PC-3 (cell line): ENCODE measurements at regions of chr6 and their contacts with region 1.

Region 1: DNA sequence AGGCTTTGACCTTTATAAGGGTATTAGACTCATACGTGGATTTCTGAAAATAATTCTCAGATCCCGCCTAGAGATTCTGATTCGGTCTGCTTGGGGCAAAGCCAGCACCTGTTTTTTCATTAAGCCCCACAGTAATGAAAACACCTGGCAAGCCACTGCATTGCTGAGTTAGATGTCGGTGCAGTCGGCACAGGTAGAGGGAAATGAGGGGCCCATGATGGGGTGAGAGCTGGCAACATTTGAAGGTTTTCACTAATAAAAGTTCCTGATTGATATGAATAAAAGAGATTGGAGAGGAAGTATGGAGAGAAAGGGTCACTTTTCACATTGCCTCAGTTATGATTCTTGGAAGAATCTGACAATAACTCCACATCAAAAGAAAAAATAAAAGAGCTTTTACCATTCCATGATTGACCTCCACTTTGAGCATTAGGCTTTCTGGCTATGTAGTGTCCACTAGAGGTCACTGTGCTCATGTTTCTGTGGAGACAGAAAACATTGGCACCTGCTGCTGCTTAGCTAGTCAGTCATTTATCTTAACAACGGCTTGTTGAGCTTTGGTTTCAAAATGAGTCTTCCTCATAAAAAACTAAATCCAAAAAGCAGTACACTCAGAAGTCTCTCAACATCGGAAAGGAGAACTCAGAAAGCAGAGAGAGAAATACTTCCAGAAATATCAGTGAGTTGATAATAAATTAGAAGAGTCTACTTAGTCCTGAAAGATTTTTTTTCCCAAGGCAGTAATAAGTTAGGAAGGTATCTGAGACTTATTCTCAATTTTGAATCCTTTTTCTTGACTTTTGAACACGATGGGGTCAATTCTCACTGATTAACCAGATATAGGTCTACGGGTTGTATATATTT is 53.3 kb upstream of the KLHL31 start:
- DNase-seq: peak; percentile 88
- ATAC-seq: peak; percentile 93
- H3K4me3 ChIP-seq: no peak overlapping the region
- H3K27ac ChIP-seq: no peak overlapping the region
- H3K4me1 ChIP-seq: peaks cover 15% of the 10 kb centered on the region
- H3K27me3 ChIP-seq: no peaks in the 10 kb centered on the region
- CTCF ChIP-seq: peak; percentile 94

Region 2: DNA sequence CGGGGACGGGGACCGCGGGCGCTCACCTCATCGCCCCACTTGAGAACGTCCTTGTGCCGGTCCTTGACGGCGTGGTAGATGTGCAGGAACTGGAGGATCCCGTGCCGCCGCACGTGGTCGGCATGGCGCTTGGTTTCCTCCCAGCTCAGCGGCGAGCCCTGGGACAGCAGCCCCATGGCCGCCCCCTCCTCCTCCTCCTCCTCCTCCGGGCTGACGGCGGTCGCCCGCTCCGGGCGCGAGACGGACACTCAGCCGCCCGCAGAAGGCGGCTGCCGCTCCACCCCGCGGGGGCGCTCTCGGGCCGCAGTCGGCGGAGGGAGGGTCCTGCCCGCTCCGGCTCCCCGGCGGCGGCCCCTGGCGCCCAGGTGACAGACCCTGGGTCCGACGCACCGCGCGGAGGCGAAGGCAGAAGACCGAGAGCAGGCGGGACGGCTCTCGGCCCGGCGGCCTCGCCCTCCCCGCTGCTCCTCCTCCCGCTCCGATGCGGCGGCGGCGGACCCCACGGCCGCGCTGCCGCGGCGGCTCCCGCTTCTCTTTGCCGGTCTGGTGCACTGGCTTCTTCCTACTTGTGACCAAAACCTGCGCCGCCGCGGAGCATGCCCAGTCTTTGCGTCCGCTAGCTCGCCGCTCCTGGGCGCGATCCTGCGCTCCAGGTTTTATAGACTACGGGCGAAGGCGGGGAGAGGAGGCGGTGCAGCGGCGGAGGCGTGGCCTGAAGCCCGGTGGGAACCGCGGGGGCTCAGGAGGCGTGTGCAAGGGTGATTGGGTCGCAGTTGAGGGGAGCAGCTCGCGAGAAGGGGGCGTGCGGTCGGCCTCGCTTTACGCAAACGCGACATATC is 174.1 kb before region 1 on chr6 and contains the start of gene GCLC:
- CTCF ChIA-PET with region 1: no interaction called
- POLR2A ChIA-PET with region 1: no interaction called
- intact Hi-C with region 1: loop called (anchors 2 kb)
- DNase-seq: peak; percentile 96
- ATAC-seq: peak; percentile 55
- H3K4me3 ChIP-seq: peak within 1 kb of the TSS; percentile 92
- H3K27ac ChIP-seq: peak within 1 kb of the TSS; percentile 56
- H3K4me1 ChIP-seq: peaks cover 42% of the 10 kb centered on the region
- H3K27me3 ChIP-seq: no peaks in the 10 kb centered on the region
- CTCF ChIP-seq: peak; percentile 65
- total RNA-seq, gene GCLC: 50.1 and 54.7 TPM in 2 replicates

Region 3: GRCh38 chr6:53679446-53679933 is 39.3 kb before region 1 on chr6:
- CTCF ChIA-PET with region 1: interaction called, 6 read pairs
- POLR2A ChIA-PET with region 1: interaction called, 3 read pairs
- intact Hi-C with region 1: loop called (anchors 2 kb)
- DNase-seq: peak; percentile 59
- ATAC-seq: peak; percentile 60; the same call in 1 of the 2 replicates
- H3K4me3 ChIP-seq: no peak overlapping the region
- H3K27ac ChIP-seq: no peak overlapping the region
- H3K4me1 ChIP-seq: peaks cover 1% of the 10 kb centered on the region
- H3K27me3 ChIP-seq: no peaks in the 10 kb centered on the region
- CTCF ChIP-seq: peak; percentile 72

Region 4: DNA sequence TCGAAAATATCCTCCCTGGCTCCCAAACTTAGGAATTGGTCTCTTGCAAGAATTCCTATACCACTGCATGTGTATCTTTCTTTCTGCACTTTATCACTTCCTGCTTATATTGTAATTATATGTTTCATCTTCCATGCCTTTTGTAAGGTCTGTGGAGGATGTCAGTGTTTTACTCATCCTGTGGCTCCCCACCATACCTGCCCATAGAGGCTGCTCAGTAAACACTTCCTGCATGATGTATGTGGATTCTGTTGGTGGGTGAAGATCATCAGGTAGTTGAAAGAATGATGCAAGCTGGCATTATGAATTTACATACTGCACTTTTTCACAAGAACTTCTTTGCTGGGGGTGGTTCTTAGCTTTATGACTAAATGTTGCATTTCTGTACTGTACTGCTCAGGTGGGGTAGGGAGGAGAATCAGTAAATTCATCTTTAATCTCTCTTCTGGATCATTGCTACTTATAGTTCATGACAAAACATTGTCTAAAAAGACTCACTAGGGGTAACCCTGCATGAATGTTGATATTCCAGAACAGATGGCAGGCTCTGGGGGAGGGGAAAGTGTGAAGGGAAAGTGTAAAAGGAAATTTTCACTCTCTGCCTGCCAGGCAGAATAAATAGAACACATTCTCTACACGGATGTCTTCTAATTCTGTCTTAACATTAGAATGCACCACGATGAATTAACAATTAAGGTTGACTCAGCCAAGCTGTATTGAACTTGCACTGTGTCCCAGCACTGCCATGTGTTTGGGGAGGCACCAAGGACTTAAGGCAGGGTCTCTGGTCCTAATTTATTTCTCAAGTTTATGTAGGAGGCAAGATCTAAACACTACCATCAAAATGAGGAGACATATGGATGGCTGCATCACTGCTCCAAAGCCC is 17.3 kb before region 1 on chr6:
- CTCF ChIA-PET with region 1: interaction called, 3 read pairs
- POLR2A ChIA-PET with region 1: interaction called, 10 read pairs
- intact Hi-C with region 1: no loop called
- DNase-seq: no peak
- ATAC-seq: no peak
- H3K4me3 ChIP-seq: no peak overlapping the region
- H3K27ac ChIP-seq: no peak overlapping the region
- H3K4me1 ChIP-seq: no peaks in the 10 kb centered on the region
- H3K27me3 ChIP-seq: no peaks in the 10 kb centered on the region
- CTCF ChIP-seq: no peak

Region 5: GRCh38 chr6:53956068-53956711 is 237.4 kb after region 1 on chr6:
- CTCF ChIA-PET with region 1: interaction called, 25 read pairs
- POLR2A ChIA-PET with region 1: no interaction called
- intact Hi-C with region 1: loop called (anchors 2 kb)
- DNase-seq: peak; percentile 89
- ATAC-seq: peak; percentile 89
- H3K4me3 ChIP-seq: no peak overlapping the region
- H3K27ac ChIP-seq: no peak overlapping the region
- H3K4me1 ChIP-seq: peaks cover 20% of the 10 kb centered on the region
- H3K27me3 ChIP-seq: no peaks in the 10 kb centered on the region
- CTCF ChIP-seq: peak; percentile 94

Region 6: DNA sequence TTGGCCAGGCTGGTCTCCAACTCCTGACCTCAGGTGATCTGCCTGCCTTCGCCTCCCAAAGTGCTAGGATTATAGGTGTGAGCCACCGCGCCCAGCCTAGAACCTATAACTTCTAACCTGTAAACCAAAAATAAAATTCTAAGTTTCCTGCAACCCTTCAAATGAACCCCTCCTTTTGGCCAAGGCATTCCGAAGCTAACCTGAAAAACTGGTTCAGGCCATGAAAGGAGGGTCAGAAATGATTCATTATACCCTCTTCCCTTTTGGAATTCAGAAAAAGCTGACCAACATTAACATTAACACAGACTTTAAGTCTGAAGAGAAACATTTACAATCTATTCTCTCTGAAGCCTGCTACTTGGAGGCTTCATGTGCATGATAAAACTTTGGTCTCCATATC is 754.5 kb after region 1 on chr6:
- CTCF ChIA-PET with region 1: no interaction called
- POLR2A ChIA-PET with region 1: no interaction called
- intact Hi-C with region 1: no loop called
- DNase-seq: peak; percentile 89
- ATAC-seq: peak; percentile 37; the same call in 1 of the 2 replicates
- H3K4me3 ChIP-seq: peak overlapping the region; percentile 9; the same call in 1 of the 2 replicates
- H3K27ac ChIP-seq: peak overlapping the region; percentile 42
- H3K4me1 ChIP-seq: peaks cover 21% of the 10 kb centered on the region
- H3K27me3 ChIP-seq: no peaks in the 10 kb centered on the region
- CTCF ChIP-seq: no peak